ENCODE measurements at regions of chr5 and their contacts with region 1.

Region 1: DNA sequence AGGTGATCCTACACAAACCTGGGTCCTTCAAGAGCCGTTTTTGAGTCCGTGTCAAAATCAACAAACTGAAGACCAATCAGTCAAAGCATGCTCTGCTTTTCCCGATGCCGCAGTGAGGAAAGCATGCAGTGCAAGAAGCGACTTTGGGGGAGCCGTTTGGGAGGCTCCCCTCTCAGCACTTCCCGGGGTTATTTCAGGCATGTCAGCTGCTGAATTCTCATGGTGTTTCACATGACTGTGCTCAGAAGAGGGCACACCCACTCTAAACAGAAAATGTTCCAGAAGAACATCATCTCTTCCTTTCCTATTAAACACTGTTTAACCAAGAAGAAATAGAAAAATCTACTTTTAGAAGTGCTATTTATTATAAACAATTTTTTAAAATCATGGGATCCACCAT is 125.5 kb downstream of the EPB41L4A start:
- DNase-seq: no peak
- ATAC-seq: peak; percentile 82 to 83
- H3K4me3 ChIP-seq: no peak overlapping the region
- H3K27ac ChIP-seq: no peak overlapping the region
- H3K4me1 ChIP-seq: peaks cover 8% of the 10 kb centered on the region
- H3K27me3 ChIP-seq: no peaks in the 10 kb centered on the region

Region 2: GRCh38 chr5:111461255-111461671 is 832.3 kb before region 1 on chr5:
- intact Hi-C with region 1: no loop called
- DNase-seq: no peak
- ATAC-seq: no peak
- H3K4me3 ChIP-seq: no peak overlapping the region
- H3K27ac ChIP-seq: no peak overlapping the region
- H3K4me1 ChIP-seq: no peaks in the 10 kb centered on the region
- H3K27me3 ChIP-seq: no peaks in the 10 kb centered on the region

Region 3: GRCh38 chr5:112270299-112271293 is 23.0 kb before region 1 on chr5:
- intact Hi-C with region 1: loop called in 1 of 4 experiments (anchors 2 kb)
- DNase-seq: no peak
- ATAC-seq: no peak
- H3K4me3 ChIP-seq: no peak overlapping the region
- H3K27ac ChIP-seq: no peak overlapping the region
- H3K4me1 ChIP-seq: no peaks in the 10 kb centered on the region
- H3K27me3 ChIP-seq: no peaks in the 10 kb centered on the region

Region 4: GRCh38 chr5:112628219-112628980 is 334.8 kb after region 1 on chr5:
- intact Hi-C with region 1: no loop called
- DNase-seq: no peak
- ATAC-seq: no peak
- H3K4me3 ChIP-seq: no peak overlapping the region
- H3K27ac ChIP-seq: no peak overlapping the region
- H3K4me1 ChIP-seq: no peaks in the 10 kb centered on the region
- H3K27me3 ChIP-seq: no peaks in the 10 kb centered on the region

Measured in right cardiac atrium (tissue), 5 donors.